GM13977 (cell line): ENCODE measurements at regions of chr5 and their contacts with region 1.

Region 1: GRCh38 chr5:62457071-62457470 is 44.5 kb downstream of the IPO11 start:
- DNase-seq: no peak
- CTCF ChIP-seq: no peak

Region 2: DNA sequence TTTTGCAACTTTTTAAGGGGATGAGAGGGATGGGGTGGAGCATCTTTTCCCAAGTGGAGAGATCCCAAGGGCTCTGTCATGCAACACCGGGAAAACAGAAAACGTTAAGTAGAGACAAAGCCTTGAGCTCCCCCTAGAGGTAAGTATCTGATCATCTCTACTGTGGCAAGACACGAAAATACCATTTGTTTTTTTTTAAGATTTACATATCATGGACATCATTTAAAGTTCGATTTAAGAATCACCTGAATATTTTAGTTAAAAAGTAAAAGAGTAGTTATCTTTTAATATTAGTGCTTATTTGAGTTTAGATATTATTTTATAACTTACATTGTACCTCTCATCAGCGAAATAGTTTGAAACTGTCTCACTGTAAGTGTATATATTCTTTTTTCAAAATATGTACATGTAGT is 321.9 kb after region 1 on chr5:
- in situ Hi-C with region 1: loop called (anchors 10 kb)
- DNase-seq: peak; percentile 73
- CTCF ChIP-seq: peak; percentile 64